ENCODE measurements at regions of chr3 and their contacts with region 1.

Region 1: GRCh38 chr3:141738022-141738890 is at the start of gene RNF7:
- DNase-seq: peak; percentile 95 to 99 (median 98)
- ATAC-seq: peak; percentile 94
- H3K4me3 ChIP-seq: peak within 1 kb of the TSS; percentile 92
- H3K27ac ChIP-seq: peak within 1 kb of the TSS; percentile 88
- H3K4me1 ChIP-seq: peaks cover 10 to 39% of the 10 kb centered on the region in 2 experiments
- H3K27me3 ChIP-seq: no peaks in the 10 kb centered on the region
- CTCF ChIP-seq: peak; percentile 91 to 97 (median 95)
- EP300 ChIP-seq: no peak
- POLR2A ChIP-seq: peak; percentile 90
- RAD21 ChIP-seq: peak; percentile 86 to 95
- polyA plus RNA-seq, gene RNF7: 112 to 133 TPM

Region 2: DNA sequence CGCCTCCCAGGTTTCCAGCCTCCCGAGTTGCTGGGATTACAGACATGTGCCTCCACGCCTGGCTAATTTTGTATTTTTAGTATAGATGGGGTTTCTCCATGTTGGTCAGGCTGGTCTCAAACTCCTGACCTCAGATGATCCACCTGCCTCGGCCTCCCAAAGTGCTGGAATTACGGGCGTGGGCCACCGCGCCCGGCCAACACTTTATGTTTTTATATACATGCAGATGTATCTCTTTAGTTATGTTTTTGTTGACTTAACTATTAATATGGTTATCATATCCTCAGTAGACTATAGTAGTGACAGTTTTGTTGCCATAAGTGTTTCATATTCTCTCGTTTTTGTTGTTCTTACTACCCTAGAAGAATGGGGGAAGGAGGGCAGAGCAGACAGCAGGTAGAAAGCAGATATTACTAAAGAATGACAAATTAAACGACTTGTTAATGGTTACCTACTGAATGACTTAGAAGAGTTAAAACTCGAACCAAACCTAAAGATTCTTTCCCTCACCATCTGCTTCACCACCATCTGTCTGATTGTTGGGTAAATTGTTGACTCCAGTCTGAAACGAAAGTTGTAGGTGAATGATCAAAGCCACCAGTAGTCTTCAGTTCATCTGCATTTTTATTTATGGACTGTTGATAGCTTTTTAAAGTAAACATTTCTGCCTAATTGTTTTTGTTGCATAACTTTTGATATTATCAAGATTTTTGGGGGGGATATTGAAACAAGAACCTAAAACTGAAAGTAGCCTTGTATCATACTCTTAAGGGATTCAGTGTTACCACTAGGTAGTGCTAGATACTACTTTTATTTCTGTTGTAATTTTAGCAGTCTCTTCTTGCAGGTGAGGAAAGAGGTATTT is 162.1 kb before region 1 on chr3:
- CTCF ChIA-PET with region 1: interaction called, 5 read pairs
- POLR2A ChIA-PET with region 1: no interaction called
- in situ Hi-C with region 1: no loop called
- intact Hi-C with region 1: loop called (anchors 5 kb)
- DNase-seq: peak in 2 of 4 experiments; percentile 10 to 15
- ATAC-seq: peak; percentile 83
- H3K4me3 ChIP-seq: no peak overlapping the region
- H3K27ac ChIP-seq: no peak overlapping the region
- H3K4me1 ChIP-seq: no peaks in the 10 kb centered on the region
- H3K27me3 ChIP-seq: no peaks in the 10 kb centered on the region
- CTCF ChIP-seq: peak in 2 of 3 experiments; percentile 19 to 62; a peak in 4 of 6 replicates
- EP300 ChIP-seq: 0 out of 2 replicates have a peak, but pooled peaks have one; percentile 27
- POLR2A ChIP-seq: no peak
- RAD21 ChIP-seq: peak; percentile 66 to 68

Region 3: GRCh38 chr3:141845407-141846049 is 107.3 kb after region 1 on chr3:
- CTCF ChIA-PET with region 1: no interaction called
- POLR2A ChIA-PET with region 1: interaction called, 6 read pairs
- in situ Hi-C with region 1: no loop called
- intact Hi-C with region 1: loop called (anchors 2 kb)
- DNase-seq: peak in 2 of 4 experiments; percentile 21 to 57
- ATAC-seq: peak; percentile 20; the same call in 2 of the 3 replicates
- H3K4me3 ChIP-seq: no peak overlapping the region
- H3K27ac ChIP-seq: no peak overlapping the region
- H3K4me1 ChIP-seq: peaks cover 22 to 27% of the 10 kb centered on the region in 2 experiments; a peak in 4 of 5 replicates
- H3K27me3 ChIP-seq: no peaks in the 10 kb centered on the region
- CTCF ChIP-seq: peak; percentile 38 to 51 (median 46)
- EP300 ChIP-seq: no peak
- POLR2A ChIP-seq: no peak
- RAD21 ChIP-seq: peak in 1 of 2 experiments; percentile 52; a peak in 2 of 4 replicates

Region 4: DNA sequence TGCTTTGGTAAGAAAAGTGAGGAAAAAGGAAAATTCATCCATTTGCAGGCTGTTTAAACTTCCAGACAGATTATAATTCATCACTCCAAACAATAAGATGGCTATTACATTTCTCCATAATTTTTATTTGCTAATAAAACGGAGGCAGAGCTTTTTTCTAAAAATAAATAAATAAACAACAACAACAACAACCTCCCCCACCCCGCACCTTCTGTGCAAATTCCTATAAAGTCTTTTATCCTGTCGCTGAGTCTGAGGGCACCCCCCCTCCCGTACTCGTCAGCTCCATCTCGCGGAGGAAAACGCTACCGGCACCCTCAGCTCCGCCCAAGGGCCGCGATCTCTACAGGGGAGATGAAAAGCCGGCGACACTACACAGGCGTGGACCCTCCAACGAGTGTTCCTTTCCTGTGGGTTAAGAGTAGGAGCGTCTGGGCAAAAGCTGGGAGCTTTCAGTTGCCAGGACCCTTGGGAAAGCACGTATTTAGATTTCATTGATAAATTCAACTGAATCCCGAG is 137.2 kb after region 1 on chr3:
- CTCF ChIA-PET with region 1: interaction called, 16 read pairs
- POLR2A ChIA-PET with region 1: interaction called, 11 read pairs
- in situ Hi-C with region 1: loop called (anchors 5 kb)
- intact Hi-C with region 1: loop called (anchors 1 kb)
- DNase-seq: peak; percentile 82 to 91 (median 86)
- ATAC-seq: peak; percentile 84
- H3K4me3 ChIP-seq: peak overlapping the region; percentile 98
- H3K27ac ChIP-seq: peak overlapping the region; percentile 72
- H3K4me1 ChIP-seq: peaks cover 6 to 14% of the 10 kb centered on the region in 2 experiments; a peak in 2 of 5 replicates
- H3K27me3 ChIP-seq: no peaks in the 10 kb centered on the region
- CTCF ChIP-seq: peak; percentile 89 to 93 (median 90)
- EP300 ChIP-seq: 0 out of 2 replicates have a peak, but pooled peaks have one; percentile 23
- POLR2A ChIP-seq: no peak
- RAD21 ChIP-seq: peak; percentile 83 to 84

Region 5: GRCh38 chr3:142046320-142047020 is 308.2 kb after region 1 on chr3:
- CTCF ChIA-PET with region 1: no interaction called
- POLR2A ChIA-PET with region 1: no interaction called
- in situ Hi-C with region 1: no loop called
- intact Hi-C with region 1: no loop called
- DNase-seq: peak; percentile 80 to 94 (median 86)
- ATAC-seq: peak; percentile 98
- H3K4me3 ChIP-seq: peak overlapping the region; percentile 24
- H3K27ac ChIP-seq: peak overlapping the region; percentile 92
- H3K4me1 ChIP-seq: peaks cover 20 to 23% of the 10 kb centered on the region in 2 experiments
- H3K27me3 ChIP-seq: no peaks in the 10 kb centered on the region
- CTCF ChIP-seq: no peak
- EP300 ChIP-seq: peak; percentile 96
- POLR2A ChIP-seq: no peak
- RAD21 ChIP-seq: 0 out of 4 replicates have a peak, but pooled peaks of 1 of the 2 experiments have one; percentile 15